ENCODE measurements at regions of chr5 and their contacts with region 1.

Region 1: GRCh38 chr5:169701910-169702451 is 64.9 kb downstream of the DOCK2 start:
- DNase-seq: no peak
- H3K4me3 Mint-ChIP-seq: no peak overlapping the region
- H3K27ac Mint-ChIP-seq: peak overlapping the region; percentile 86
- H3K4me1 Mint-ChIP-seq: peaks cover 36% of the 10 kb centered on the region
- H3K27me3 Mint-ChIP-seq: no peaks in the 10 kb centered on the region

Region 2: GRCh38 chr5:169650701-169651331 is 51.2 kb before region 1 on chr5:
- intact Hi-C with region 1: loop called (anchors 1 kb)
- DNase-seq: peak; percentile 37
- H3K4me3 Mint-ChIP-seq: peak overlapping the region; percentile 72
- H3K27ac Mint-ChIP-seq: peak overlapping the region; percentile 99
- H3K4me1 Mint-ChIP-seq: peaks cover 99% of the 10 kb centered on the region
- H3K27me3 Mint-ChIP-seq: no peaks in the 10 kb centered on the region

Region 3: DNA sequence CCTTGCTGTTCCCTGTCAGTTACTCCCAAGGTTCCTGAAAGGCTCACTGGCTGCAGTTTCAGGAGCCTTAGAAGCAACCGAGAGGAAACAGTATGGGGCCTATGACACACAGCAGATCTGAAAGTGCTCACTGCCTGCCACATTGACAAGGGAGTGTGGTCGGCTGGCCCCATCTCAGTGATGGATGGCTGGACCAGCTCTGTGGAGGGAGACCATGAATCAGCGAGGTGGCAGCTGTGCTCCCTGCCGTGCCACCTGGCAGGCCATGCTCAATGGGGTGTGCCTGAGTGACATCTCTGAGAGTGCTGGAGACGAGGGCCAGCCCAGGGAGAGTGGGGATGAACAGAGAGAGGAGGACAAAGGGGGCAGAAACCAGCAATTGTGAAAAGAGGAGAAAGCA is 15.8 kb before region 1 on chr5:
- intact Hi-C with region 1: loop called (anchors 1 kb)
- DNase-seq: no peak
- H3K4me3 Mint-ChIP-seq: no peak overlapping the region
- H3K27ac Mint-ChIP-seq: no peak overlapping the region
- H3K4me1 Mint-ChIP-seq: peaks cover 4% of the 10 kb centered on the region
- H3K27me3 Mint-ChIP-seq: no peaks in the 10 kb centered on the region

Region 4: DNA sequence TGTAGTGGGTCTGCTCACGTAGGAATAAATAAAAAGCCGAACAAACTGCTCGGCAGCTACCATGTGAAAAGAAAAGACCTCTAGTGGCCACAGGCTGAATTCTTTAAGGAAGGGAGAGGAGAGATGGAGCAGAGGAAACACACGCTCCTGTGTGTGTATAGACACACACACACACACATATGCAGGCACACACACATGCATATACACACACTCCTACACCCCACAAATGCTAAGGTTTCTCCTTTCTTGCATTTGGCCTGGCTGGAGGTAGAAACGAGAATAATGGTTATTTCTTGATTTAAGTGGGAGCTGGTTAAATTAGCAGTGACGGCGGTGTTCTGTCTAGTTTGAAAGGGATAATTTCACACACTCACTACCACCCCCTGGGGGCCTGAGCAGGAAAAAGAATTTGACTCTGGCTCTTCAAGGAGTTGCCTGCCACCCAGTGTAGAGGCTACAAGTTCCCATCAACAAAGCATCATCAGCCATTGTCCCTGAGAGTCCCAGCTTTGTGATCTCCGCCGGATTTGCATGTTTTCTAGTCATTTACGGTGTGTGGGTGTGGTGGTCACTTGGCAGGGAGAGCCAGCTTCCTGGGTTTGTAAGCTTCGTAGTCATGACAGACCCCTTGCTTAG is 278.6 kb after region 1 on chr5 and contains the start of gene INSYN2B:
- intact Hi-C with region 1: loop called (anchors 10 kb)
- DNase-seq: no peak
- H3K4me3 Mint-ChIP-seq: no peak within 1 kb of the TSS
- H3K27ac Mint-ChIP-seq: no peak within 1 kb of the TSS
- H3K4me1 Mint-ChIP-seq: no peaks in the 10 kb centered on the region
- H3K27me3 Mint-ChIP-seq: no peaks in the 10 kb centered on the region
- total RNA-seq, gene INSYN2B: not detected in 2 replicates

Measured in activated T-helper 1 cell treated with anti-CD3 and anti-CD28 coated beads, Interleukin-12 subunit alpha, Interleukin-12 subunit beta, Interleukin-2, Interleukin-4 antibody, amounts not matched to agents 30 ng/mL and 10 ng/mL and 1 ng/mL, durations not matched to agents 14 hours and 24 hours and 36 hours (primary cell).